GM10248 (cell line): ENCODE measurements at regions of chr2 and their contacts with region 1.

Region 1: DNA sequence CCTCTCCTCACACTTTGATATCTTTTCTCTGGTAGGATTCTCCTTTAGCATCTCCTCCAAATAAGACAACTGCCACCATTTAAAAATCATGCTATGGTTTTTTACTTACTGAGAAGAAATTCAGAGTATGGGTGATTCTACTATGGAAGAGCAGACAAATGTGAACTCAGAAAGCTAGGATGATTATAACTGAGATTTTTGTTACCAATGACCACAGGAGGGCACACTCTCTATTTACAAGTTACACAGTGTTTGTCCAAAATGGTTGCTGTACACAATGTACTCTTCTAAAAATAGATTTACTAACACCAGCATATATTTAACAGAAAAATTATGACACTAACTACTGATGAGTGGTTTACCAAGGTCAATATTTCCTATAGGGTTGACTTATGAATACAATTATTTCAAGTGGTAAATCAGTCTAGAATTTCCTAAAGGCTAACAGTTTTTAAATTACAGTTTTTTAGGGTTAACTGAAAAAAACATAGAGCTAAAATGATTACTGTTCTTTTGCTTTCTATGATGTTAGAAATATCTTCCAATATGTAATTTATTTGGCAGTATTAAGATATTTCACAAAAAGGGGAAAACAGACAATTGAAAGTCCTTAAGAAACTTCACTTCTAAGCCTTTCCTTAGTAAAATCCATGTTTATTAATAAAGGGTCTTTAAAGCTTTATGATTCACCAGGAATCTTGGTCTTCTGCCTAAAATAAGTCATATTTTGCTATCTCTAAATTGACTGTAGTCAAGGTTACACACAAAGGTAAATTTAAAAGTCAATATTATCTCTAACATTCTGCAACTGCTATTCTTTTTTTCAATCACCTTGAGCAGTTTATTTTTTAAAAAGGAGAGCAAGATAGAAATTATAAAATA is 57.2 kb downstream of the MAP4K3 start:
- DNase-seq: peak; percentile 50
- CTCF ChIP-seq: peak; percentile 54

Region 2: GRCh38 chr2:39368846-39369245 is 11.0 kb before region 1 on chr2:
- CTCF ChIA-PET with region 1: interaction called, 10 read pairs
- POLR2A ChIA-PET with region 1: no interaction called
- DNase-seq: no peak
- CTCF ChIP-seq: no peak

Region 3: DNA sequence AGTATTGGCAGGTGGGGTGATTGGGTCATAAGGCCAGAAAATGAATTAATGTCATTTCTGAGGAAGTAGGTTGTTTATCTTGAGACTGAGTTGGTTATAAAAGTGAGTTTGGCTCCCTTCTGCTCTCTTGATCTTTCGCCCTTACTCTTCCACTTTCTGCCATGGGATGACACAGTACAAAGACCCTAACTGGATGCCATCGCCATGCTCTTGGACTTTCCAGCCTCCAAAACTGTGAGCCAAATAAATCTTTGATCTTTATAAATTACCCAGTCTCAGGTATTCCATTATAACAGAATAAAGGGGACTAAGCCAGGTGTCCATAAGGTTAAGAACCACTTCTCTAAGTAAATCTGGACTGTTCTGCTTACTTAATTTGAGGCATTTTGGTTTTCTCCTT is 12.8 kb after region 1 on chr2:
- CTCF ChIA-PET with region 1: interaction called, 10 read pairs
- POLR2A ChIA-PET with region 1: no interaction called
- DNase-seq: no peak
- CTCF ChIP-seq: no peak

Region 4: GRCh38 chr2:39399570-39399969 is 19.7 kb after region 1 on chr2:
- CTCF ChIA-PET with region 1: interaction called, 10 read pairs
- POLR2A ChIA-PET with region 1: no interaction called
- DNase-seq: no peak
- CTCF ChIP-seq: no peak

Region 5: GRCh38 chr2:39728941-39729351 is 349.1 kb after region 1 on chr2:
- CTCF ChIA-PET with region 1: interaction called, 38 read pairs
- POLR2A ChIA-PET with region 1: no interaction called
- DNase-seq: peak; percentile 34
- CTCF ChIP-seq: peak; percentile 52